PC-9 (cell line): ENCODE measurements at regions of chr2 and their contacts with region 1.

Region 1: DNA sequence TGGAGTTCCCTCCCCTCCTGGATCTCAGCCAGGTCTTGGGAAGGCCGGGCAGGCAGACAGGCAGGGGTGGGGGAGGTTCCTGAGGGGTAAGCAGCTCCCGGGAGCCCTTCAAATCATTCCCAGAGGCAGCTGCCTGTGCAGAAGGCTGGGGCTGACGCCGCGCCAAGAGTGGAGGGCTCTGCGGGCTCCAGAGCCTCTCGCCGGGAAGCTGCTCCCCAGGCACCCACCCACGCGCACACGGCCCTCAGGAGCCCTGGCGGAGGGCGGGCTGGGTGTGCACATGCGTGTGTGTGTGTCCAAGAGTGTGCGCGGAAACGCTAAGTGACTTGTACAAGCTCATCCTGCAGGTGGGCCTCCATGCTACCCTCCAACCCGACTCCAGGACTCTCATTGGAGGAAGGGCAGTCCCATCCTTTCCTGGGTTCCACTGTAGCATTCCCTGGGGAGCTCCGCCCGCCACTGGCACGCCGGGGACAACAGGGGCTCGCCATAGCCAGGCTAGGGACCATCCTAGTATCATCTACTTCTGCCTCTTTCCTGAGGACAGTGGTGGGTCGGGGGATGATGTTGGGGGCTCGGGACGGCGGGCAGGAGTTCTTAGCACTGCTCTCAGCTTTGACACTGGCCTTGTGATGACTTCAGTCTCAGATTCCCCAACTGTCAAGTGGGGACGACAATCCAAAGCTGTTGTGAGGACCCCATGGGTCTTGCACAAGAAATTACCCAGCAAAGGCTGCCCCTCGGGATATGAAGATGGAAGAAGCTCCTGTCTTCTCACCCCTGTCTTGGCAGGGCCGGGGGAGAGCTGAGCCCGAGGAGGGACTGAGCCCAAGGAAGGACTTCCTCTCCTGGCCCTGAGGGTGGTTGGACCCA is 50.3 kb downstream of the INHBB start:
- DNase-seq: peak in 1 of 2 experiments; percentile 64
- H3K4me3 ChIP-seq: no peak overlapping the region
- H3K27ac ChIP-seq: peak overlapping the region; percentile 96
- H3K4me1 ChIP-seq: peaks cover 57% of the 10 kb centered on the region
- H3K27me3 ChIP-seq: no peaks in the 10 kb centered on the region
- CTCF ChIP-seq: no peak

Region 2: DNA sequence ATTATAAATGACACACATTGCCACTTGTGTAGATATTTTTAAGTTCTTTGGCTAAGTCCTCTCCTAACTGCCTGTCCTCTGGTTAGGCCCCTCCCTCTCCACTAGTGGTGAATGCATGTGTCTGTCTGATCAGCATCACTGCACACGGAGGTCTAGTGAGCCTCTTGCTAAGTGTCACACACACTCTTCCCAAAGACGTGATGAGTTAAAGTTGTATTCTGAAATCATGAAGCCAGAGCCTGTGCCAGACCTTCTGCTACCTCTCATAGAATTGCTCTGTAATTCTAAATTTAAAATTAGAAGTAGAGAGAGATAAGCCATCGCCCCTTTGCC is 102.3 kb before region 1 on chr2:
- CTCF ChIA-PET with region 1: no interaction called
- POLR2A ChIA-PET with region 1: no interaction called
- intact Hi-C with region 1: loop called (anchors 1 kb)
- DNase-seq: no peak
- H3K4me3 ChIP-seq: no peak overlapping the region
- H3K27ac ChIP-seq: no peak overlapping the region
- H3K4me1 ChIP-seq: peaks cover 39% of the 10 kb centered on the region
- H3K27me3 ChIP-seq: no peaks in the 10 kb centered on the region
- CTCF ChIP-seq: no peak

Region 3: DNA sequence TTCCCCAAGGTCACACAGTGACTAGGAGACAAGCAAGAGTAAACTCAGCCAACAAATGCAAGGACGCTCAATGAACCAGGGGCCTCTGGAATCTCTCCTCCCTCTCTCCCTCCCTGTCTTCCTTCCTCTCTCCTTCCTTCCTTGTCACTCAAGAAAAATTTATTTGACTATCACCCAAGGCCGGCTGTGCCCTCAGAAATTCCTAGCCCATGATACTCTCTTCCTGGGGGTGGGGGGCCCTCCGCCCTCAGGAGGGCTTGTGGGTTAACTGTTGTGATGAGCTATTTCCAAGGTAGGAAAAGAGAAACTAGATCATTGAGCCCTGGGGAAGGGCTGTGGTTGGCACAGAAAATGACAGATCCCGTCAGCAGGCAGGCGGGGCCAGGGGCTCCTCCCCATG is 28.6 kb before region 1 on chr2:
- CTCF ChIA-PET with region 1: interaction called, 3 read pairs
- POLR2A ChIA-PET with region 1: interaction called, 7 read pairs
- intact Hi-C with region 1: loop called (anchors 1 kb)
- DNase-seq: peak; percentile 55 to 80
- H3K4me3 ChIP-seq: no peak overlapping the region
- H3K27ac ChIP-seq: 0 out of 2 replicates have a peak overlapping the region, but pooled peaks have one; percentile 1
- H3K4me1 ChIP-seq: peaks cover 20% of the 10 kb centered on the region
- H3K27me3 ChIP-seq: no peaks in the 10 kb centered on the region
- CTCF ChIP-seq: no peak

Region 4: GRCh38 chr2:120520929-120521912 is 125.0 kb after region 1 on chr2:
- CTCF ChIA-PET with region 1: no interaction called
- POLR2A ChIA-PET with region 1: interaction called, 3 read pairs
- intact Hi-C with region 1: loop called (anchors 5 kb)
- DNase-seq: peak; percentile 59 to 74
- H3K4me3 ChIP-seq: no peak overlapping the region
- H3K27ac ChIP-seq: no peak overlapping the region
- H3K4me1 ChIP-seq: peaks cover 15% of the 10 kb centered on the region
- H3K27me3 ChIP-seq: no peaks in the 10 kb centered on the region
- CTCF ChIP-seq: peak; percentile 99

Region 5: DNA sequence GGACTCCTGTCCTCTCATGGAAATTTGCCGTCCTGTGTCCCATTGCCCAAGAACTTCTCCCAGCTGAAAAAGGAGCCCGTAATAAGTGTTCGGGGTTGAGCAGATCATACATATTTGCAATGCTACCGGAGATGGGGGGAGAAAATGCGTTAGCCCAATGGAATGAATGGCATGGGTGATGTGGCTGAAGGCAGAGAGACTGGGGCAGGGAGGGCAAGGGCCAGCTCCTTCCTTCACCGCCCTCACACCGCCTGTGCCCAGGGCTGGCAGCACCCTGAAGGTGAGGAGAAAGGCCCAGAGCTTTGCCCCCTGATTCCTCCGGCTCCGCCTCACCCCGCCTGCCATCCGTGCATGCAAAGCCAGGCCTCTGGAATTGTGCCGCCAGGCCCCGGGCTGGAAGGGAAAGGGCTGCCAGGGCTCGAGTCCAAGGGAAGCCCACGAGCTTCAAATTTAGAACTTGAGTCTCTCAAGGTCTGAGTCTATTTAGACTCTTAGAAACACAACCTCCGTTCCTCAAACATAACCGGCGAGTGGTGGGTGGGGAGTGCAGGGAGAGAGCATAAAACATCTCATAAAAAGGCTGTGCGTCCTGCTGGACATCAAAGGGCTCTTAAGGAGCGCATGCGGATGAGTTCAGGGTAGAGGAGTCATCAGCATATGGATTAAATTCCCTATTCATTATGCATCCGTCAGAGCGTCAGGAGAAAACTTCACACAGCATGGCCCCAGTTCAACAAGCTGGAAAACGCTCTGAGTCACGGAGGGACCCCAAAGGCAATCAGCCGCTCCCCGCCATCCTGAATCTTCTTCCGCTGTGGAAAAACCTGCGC is 217.7 kb after region 1 on chr2:
- CTCF ChIA-PET with region 1: no interaction called
- POLR2A ChIA-PET with region 1: no interaction called
- intact Hi-C with region 1: loop called (anchors 2 kb)
- DNase-seq: peak; percentile 69 to 73
- H3K4me3 ChIP-seq: no peak overlapping the region
- H3K27ac ChIP-seq: peak overlapping the region; percentile 53
- H3K4me1 ChIP-seq: peaks cover 26% of the 10 kb centered on the region
- H3K27me3 ChIP-seq: no peaks in the 10 kb centered on the region
- CTCF ChIP-seq: no peak